A549 (cell line): ENCODE measurements at regions of chr17 and their contacts with region 1.

Region 1: DNA sequence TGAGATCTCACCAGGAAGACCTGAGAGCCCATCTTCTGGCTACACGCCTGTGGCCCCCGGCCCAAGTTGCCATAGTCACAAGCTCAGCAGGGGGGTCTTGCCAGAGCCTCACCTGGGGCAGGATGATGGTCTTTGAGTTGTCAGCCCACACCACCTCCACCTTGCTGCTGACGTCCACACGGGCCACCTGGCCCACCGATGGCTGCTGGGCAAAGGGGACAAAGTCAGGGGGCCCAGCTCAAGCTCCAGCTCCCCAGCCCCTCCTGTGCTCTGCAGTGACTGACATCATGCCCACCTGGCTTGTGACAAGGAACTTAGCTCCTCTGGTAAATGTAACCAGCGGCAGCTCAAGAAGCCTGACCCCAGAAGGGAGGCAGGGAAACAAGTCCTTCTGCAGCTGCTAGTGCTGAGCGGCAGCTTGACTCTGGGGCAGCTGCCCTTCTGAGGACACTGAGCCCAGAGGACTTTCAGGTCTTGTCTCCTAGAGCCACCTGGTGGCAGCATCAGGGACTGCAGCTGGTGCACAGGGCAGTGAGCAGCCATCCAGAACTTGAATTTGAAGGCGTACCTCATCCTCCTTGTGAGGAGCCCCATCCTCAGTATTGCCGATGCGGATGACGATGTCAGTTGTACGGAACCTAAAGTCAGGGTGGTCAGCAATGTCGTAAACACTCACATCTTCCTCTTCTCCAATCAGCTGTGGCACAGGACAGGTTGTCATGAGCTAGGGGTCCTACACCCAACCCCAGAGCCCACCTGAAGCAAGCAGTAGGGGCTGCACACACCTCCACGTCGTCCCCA is 13.5 kb downstream of the SPHK1 start:
- DNase-seq: peak; percentile 88 to 90
- ATAC-seq: peak; percentile 78 to 93
- H3K4me3 ChIP-seq: no peak overlapping the region
- H3K27ac ChIP-seq: no peak overlapping the region
- H3K4me1 ChIP-seq: no peaks in the 10 kb centered on the region
- CTCF ChIP-seq: peak; percentile 95
- EP300 ChIP-seq: no peak
- POLR2A ChIP-seq: no peak
- RAD21 ChIP-seq: peak; percentile 78 to 86

Region 2: GRCh38 chr17:76166168-76166567 is 231.7 kb before region 1 on chr17:
- CTCF ChIA-PET with region 1: no interaction called
- POLR2A ChIA-PET with region 1: no interaction called
- DNase-seq: no peak
- ATAC-seq: no peak
- H3K4me3 ChIP-seq: no peak overlapping the region
- H3K27ac ChIP-seq: no peak overlapping the region
- H3K4me1 ChIP-seq: no peaks in the 10 kb centered on the region
- CTCF ChIP-seq: no peak
- EP300 ChIP-seq: no peak
- POLR2A ChIP-seq: no peak
- RAD21 ChIP-seq: no peak

Region 3: DNA sequence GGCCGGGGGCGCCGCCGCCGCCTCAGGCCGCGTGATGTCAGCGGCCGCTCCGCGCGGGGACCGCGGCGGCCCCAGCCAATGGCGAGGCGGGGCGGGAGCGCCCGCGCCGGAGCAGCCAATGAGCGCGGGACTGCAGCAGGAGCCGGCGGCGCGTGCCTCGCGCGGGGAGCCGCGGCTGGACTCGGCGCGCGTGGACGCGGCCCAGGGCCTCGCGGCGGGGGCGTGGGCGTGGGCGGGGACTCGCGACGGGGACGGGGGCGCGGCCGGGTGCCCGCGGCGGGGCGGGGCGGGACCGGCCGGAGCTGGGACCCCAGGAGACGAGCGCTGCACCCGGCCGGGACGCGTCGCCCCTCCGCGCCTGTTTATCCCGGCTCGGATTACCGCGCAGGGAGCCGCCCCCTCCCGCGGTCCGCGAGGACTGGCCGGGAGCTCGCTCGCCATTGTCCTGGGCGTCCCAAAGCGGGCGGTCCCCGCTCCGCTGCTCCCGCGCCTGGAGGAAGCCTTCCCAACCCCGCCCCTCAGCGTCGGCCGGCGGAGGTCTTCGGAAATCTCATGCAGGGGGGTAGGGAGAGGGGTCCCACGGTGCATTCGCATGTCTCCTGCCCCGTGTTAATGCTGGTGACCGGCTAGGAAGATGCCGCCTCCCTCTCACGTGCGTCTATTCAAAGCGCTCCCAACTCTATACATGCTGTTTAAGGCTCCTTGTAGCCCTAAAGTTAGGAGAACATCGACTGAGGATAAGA is 157.3 kb before region 1 on chr17 and contains the start of gene RNF157:
- CTCF ChIA-PET with region 1: no interaction called
- POLR2A ChIA-PET with region 1: no interaction called
- DNase-seq: peak; percentile 60 to 81
- ATAC-seq: peak; percentile 87 to 91
- H3K4me3 ChIP-seq: peak within 1 kb of the TSS; percentile 54
- H3K27ac ChIP-seq: peak within 1 kb of the TSS; percentile 63 to 84
- H3K4me1 ChIP-seq: peaks cover 24% of the 10 kb centered on the region
- CTCF ChIP-seq: no peak
- EP300 ChIP-seq: no peak
- POLR2A ChIP-seq: peak; percentile 33
- RAD21 ChIP-seq: no peak
- polyA plus RNA-seq, gene RNF157: 7.2 and 8.2 TPM in 2 replicates

Region 4: DNA sequence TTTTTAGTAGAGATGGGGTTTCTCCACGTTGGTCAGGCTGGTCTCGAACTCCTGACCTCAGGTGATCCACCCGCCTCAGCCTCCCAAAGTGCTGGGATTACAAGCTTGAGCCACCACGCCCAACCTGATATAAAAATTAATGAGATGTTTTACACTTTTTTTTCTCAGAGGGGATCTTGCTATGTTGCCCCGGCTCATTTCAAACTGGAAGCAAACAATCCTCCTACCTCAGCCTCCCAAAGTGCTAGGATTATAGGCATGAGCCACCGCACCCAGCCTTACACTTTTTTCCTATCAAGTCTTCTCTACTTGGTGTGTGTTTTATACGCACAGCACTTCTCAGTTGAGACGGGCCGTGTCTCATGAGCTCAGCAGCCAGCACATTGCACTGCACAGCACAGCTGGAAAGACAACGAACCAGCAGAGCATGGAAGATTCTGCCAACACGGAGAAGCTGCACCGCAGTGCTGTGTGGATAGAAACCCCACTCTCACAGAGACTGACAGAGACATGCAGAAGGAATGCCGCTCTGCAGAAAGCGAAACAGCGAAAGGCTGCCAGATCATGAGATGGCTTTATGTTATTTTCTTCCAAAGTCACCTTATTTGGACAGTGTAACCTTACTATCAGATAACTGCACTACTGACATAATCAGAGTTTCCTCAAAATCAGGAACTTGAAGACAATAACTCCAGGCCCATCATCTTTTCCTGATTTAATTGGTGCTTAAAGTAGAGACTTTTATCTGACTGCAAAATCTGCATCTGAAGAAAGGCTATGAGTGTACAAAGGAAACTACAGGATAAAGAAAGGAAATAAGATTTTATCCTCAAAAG is 83.3 kb before region 1 on chr17:
- CTCF ChIA-PET with region 1: interaction called, 252 read pairs
- POLR2A ChIA-PET with region 1: no interaction called
- DNase-seq: no peak
- ATAC-seq: no peak
- H3K4me3 ChIP-seq: no peak overlapping the region
- H3K27ac ChIP-seq: no peak overlapping the region
- H3K4me1 ChIP-seq: no peaks in the 10 kb centered on the region
- CTCF ChIP-seq: no peak
- EP300 ChIP-seq: no peak
- POLR2A ChIP-seq: no peak
- RAD21 ChIP-seq: no peak

Region 5: DNA sequence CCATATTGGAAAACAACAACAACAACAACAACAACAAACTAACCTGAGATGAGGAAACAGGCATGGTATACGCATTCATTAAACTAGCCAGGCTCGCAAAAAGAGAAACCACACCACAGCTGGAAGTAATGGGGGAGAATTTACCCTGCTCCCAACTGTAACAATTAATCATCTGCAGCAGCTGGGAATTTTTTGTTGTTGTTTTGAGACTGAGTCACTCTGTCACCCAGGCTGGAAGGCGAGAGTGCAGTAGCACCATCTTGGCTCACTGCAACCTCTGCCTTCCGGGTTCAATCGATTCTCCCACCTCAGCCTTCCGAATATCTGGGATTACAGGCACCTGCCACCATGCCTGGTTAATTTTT is 60.5 kb before region 1 on chr17:
- CTCF ChIA-PET with region 1: interaction called, 20 read pairs
- POLR2A ChIA-PET with region 1: no interaction called
- DNase-seq: no peak
- ATAC-seq: no peak
- H3K4me3 ChIP-seq: no peak overlapping the region
- H3K27ac ChIP-seq: no peak overlapping the region
- H3K4me1 ChIP-seq: no peaks in the 10 kb centered on the region
- CTCF ChIP-seq: no peak
- EP300 ChIP-seq: no peak
- POLR2A ChIP-seq: no peak
- RAD21 ChIP-seq: no peak

Region 6: DNA sequence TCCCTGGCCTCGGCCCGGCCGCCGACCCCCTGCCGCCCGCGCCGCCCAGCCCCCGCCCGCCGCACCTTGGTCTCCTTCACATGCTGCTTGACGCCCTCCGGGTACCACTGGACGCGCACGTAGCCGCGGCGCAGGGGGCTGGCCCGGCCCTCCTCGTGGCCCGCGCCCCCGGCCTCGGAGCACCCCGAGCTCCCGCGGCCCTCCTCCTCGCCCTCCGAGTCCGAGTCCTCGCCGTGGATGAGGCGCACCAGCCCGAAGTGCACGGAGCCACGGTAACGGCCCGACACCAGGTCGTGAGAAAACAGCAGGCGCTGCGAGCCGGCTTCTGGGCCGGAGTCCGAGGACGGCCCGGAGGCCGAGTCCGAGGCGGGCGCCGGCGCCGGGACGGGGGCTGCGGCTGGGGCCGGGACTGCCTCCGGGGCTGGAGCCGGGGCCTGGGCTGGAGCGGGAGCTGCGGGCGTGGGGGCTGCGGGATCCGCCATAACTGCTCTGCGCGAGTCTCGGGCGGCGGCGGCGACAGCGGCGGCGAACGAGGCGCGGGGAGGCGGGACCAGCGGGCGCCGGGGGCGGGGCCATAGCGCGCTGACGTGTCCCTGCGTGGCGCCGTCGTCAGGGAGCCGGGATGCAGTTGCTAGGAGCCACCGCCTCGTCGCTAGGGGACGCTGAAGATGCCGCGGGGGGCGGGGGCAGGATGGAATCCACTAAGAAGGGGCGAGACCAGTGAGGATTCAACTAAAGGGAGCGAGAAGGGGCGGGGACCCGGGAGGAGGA is 55.0 kb after region 1 on chr17 and contains the start of gene UBE2O:
- CTCF ChIA-PET with region 1: interaction called, 1,107 read pairs
- POLR2A ChIA-PET with region 1: no interaction called
- DNase-seq: peak; percentile 94 to 96
- ATAC-seq: peak; percentile 91 to 93
- H3K4me3 ChIP-seq: peak within 1 kb of the TSS; percentile 84
- H3K27ac ChIP-seq: peak within 1 kb of the TSS; percentile 85 to 94
- H3K4me1 ChIP-seq: peaks cover 28% of the 10 kb centered on the region
- CTCF ChIP-seq: peak; percentile 44; the same call in 2 of the 3 replicates
- EP300 ChIP-seq: no peak
- POLR2A ChIP-seq: peak; percentile 56
- RAD21 ChIP-seq: no peak
- polyA plus RNA-seq, gene UBE2O: 22.0 and 28.8 TPM in 2 replicates

Region 7: GRCh38 chr17:76506408-76507349 is 108.8 kb after region 1 on chr17:
- CTCF ChIA-PET with region 1: interaction called, 72 read pairs
- POLR2A ChIA-PET with region 1: no interaction called
- DNase-seq: peak; percentile 71 to 95
- ATAC-seq: peak; percentile 80 to 90
- H3K4me3 ChIP-seq: no peak overlapping the region
- H3K27ac ChIP-seq: peak overlapping the region; percentile 52 to 73; a peak in 5 of 6 replicates
- H3K4me1 ChIP-seq: peaks cover 9% of the 10 kb centered on the region
- CTCF ChIP-seq: peak; percentile 98
- EP300 ChIP-seq: no peak
- POLR2A ChIP-seq: no peak
- RAD21 ChIP-seq: peak; percentile 99

Region 8: GRCh38 chr17:76612977-76613851 is 215.3 kb after region 1 on chr17:
- CTCF ChIA-PET with region 1: no interaction called
- POLR2A ChIA-PET with region 1: no interaction called
- DNase-seq: peak in 1 of 2 experiments; percentile 58
- ATAC-seq: peak; percentile 58 to 79; a peak in 5 of 6 replicates
- H3K4me3 ChIP-seq: no peak overlapping the region
- H3K27ac ChIP-seq: no peak overlapping the region
- H3K4me1 ChIP-seq: peaks cover 10% of the 10 kb centered on the region
- CTCF ChIP-seq: no peak
- EP300 ChIP-seq: no peak
- POLR2A ChIP-seq: no peak
- RAD21 ChIP-seq: 0 out of 5 replicates have a peak, but pooled peaks of 1 of the 2 experiments have one; percentile 14